Endothelial cell of umbilical vein (primary cell): ENCODE measurements at regions of chr1 and their contacts with region 1.

Region 1: DNA sequence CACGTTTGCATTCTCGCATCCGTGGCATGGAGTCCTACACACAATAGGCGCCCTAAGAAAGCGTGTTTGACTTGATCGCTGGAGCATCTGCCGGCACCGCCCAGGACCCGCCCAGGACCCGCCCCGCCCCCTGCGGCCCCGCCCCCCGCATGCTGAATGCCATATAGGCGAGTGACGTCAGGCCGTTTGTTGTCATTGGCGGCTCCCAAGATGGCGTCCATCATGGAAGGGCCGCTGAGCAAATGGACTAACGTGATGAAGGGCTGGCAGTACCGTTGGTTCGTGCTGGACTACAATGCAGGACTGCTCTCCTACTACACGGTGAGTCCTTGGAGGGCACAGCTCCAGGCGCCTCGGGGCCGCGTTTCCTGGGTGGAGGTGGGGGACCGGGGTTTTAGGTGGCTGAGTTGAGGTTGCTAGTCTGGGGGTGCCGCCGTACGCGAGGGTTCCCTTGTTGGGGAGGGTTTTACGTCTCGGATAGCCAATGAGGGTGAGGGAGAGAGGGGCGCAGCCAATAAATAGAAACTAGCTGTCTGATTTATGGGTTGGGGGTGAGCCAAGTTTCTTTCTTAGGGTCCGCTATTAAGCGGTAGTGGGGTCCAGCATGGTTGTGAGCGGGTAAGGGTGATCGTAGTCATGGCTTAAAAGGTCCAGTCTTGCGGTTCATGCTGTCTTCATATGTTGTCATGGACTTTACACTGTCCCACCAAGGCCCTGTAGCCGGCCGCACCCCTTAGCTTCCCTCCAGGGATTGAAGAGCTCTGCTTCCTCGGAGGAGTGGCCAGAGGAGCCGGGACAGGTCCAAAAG is at the start of gene OSBPL9:
- DNase-seq: peak; percentile 96
- H3K4me3 ChIP-seq: peak within 1 kb of the TSS; percentile 89 to 95 (median 92)
- H3K27ac ChIP-seq: peak within 1 kb of the TSS; percentile 50
- H3K4me1 ChIP-seq: peaks cover 28% of the 10 kb centered on the region
- H3K27me3 ChIP-seq: peaks cover 2 to 3% of the 10 kb centered on the region in 2 experiments
- CTCF ChIP-seq: no peak
- POLR2A ChIP-seq: peak; percentile 60
- total RNA-seq, gene OSBPL9: 74.8 and 80.3 TPM in 2 replicates

Region 2: GRCh38 chr1:51494138-51494830 is 122.8 kb before region 1 on chr1:
- CTCF ChIA-PET with region 1: no interaction called
- POLR2A ChIA-PET with region 1: no interaction called
- dilution Hi-C with region 1: no loop called
- intact Hi-C with region 1: no loop called
- DNase-seq: no peak
- H3K4me3 ChIP-seq: no peak overlapping the region
- H3K27ac ChIP-seq: no peak overlapping the region
- H3K4me1 ChIP-seq: no peaks in the 10 kb centered on the region
- H3K27me3 ChIP-seq: no peaks in the 10 kb centered on the region
- CTCF ChIP-seq: no peak
- POLR2A ChIP-seq: no peak

Region 3: GRCh38 chr1:51671527-51672325 is 54.6 kb after region 1 on chr1:
- CTCF ChIA-PET with region 1: no interaction called
- POLR2A ChIA-PET with region 1: interaction called, 3 read pairs
- dilution Hi-C with region 1: no loop called
- intact Hi-C with region 1: loop called (anchors 2 kb)
- DNase-seq: peak; percentile 95
- H3K4me3 ChIP-seq: peak overlapping the region in 1 of 3 experiments; percentile 40
- H3K27ac ChIP-seq: peak overlapping the region; percentile 75
- H3K4me1 ChIP-seq: peaks cover 54% of the 10 kb centered on the region
- H3K27me3 ChIP-seq: no peaks in the 10 kb centered on the region
- CTCF ChIP-seq: no peak
- POLR2A ChIP-seq: no peak